ENCODE measurements at regions of chr6 and their contacts with region 1.

Region 1: GRCh38 chr6:111210194-111210728 is 123.0 kb downstream of the SLC16A10 start:
- DNase-seq: peak in 1 of 2 donors; percentile 76
- ATAC-seq: peak in 2 of 3 donors; percentile 74 to 81
- H3K4me3 ChIP-seq: no peak overlapping the region
- H3K4me3 Mint-ChIP-seq: no peak overlapping the region
- H3K27ac ChIP-seq: no peak overlapping the region
- H3K27ac Mint-ChIP-seq: no peak overlapping the region
- H3K4me1 ChIP-seq: no peaks in the 10 kb centered on the region
- H3K4me1 Mint-ChIP-seq: no peaks in the 10 kb centered on the region
- H3K27me3 ChIP-seq: no peaks in the 10 kb centered on the region
- H3K27me3 Mint-ChIP-seq: peaks cover 0 to 5% of the 10 kb centered on the region in 2 donors
- CTCF ChIP-seq: peak; percentile 62

Region 2: GRCh38 chr6:110528101-110528929 is 681.9 kb before region 1 on chr6:
- intact Hi-C with region 1: loop called (anchors 1 kb)
- DNase-seq: peak in 1 of 2 donors; percentile 81
- ATAC-seq: peak; percentile 64 to 76 (median 64)
- H3K4me3 ChIP-seq: no peak overlapping the region
- H3K4me3 Mint-ChIP-seq: no peak overlapping the region
- H3K27ac ChIP-seq: no peak overlapping the region
- H3K27ac Mint-ChIP-seq: no peak overlapping the region
- H3K4me1 ChIP-seq: no peaks in the 10 kb centered on the region
- H3K4me1 Mint-ChIP-seq: no peaks in the 10 kb centered on the region
- H3K27me3 ChIP-seq: no peaks in the 10 kb centered on the region
- H3K27me3 Mint-ChIP-seq: peaks cover 7 to 8% of the 10 kb centered on the region in 2 donors
- CTCF ChIP-seq: peak; percentile 81

Region 3: GRCh38 chr6:111011360-111012142 is 198.7 kb before region 1 on chr6:
- intact Hi-C with region 1: loop called (anchors 2 kb)
- DNase-seq: peak in 1 of 2 donors; percentile 66
- ATAC-seq: peak in 2 of 3 donors; percentile 66 to 68
- H3K4me3 ChIP-seq: no peak overlapping the region
- H3K4me3 Mint-ChIP-seq: no peak overlapping the region
- H3K27ac ChIP-seq: no peak overlapping the region
- H3K27ac Mint-ChIP-seq: no peak overlapping the region
- H3K4me1 ChIP-seq: no peaks in the 10 kb centered on the region
- H3K4me1 Mint-ChIP-seq: peaks cover 0 to 6% of the 10 kb centered on the region in 2 donors
- H3K27me3 ChIP-seq: no peaks in the 10 kb centered on the region
- H3K27me3 Mint-ChIP-seq: no peaks in the 10 kb centered on the region
- CTCF ChIP-seq: peak; percentile 66

Region 4: DNA sequence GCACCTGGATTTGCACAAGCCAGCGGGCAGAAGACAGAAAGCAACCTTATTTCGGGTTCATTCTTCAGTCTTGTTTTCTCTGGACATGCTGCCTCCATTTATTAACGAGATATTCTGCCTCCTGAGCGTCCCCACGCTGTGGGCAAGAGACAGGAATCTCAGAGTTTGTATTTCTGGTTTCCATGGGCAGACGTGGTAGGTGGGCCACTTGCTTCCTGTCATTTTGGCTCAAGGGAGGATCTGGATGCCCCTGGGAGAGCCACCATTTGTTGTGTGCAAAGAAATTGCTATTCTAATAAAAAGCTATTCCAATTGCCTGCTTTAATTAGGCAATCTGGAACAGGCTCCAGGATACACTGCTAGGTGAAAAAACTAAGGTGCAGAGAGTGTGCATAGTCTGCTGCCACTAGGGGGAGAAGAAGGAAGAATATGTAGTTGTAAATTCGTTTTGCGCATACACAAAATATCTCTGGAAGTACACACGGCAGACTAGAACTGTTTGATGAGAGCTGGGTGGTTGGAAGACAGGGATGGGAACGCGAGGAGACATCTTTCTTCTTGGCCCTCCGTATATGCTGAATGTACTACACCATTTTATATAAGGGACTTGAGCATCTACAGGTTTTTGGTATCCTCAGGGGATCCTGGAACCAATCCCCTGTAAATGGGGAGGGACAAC is 153.0 kb before region 1 on chr6:
- intact Hi-C with region 1: loop called (anchors 1 kb)
- DNase-seq: peak in 1 of 2 donors; percentile 69
- ATAC-seq: peak in 2 of 3 donors; percentile 47 to 60
- H3K4me3 ChIP-seq: no peak overlapping the region
- H3K4me3 Mint-ChIP-seq: no peak overlapping the region
- H3K27ac ChIP-seq: no peak overlapping the region
- H3K27ac Mint-ChIP-seq: no peak overlapping the region
- H3K4me1 ChIP-seq: no peaks in the 10 kb centered on the region
- H3K4me1 Mint-ChIP-seq: no peaks in the 10 kb centered on the region
- H3K27me3 ChIP-seq: no peaks in the 10 kb centered on the region
- H3K27me3 Mint-ChIP-seq: peaks cover 4 to 10% of the 10 kb centered on the region in 2 donors
- CTCF ChIP-seq: peak; percentile 57

Region 5: DNA sequence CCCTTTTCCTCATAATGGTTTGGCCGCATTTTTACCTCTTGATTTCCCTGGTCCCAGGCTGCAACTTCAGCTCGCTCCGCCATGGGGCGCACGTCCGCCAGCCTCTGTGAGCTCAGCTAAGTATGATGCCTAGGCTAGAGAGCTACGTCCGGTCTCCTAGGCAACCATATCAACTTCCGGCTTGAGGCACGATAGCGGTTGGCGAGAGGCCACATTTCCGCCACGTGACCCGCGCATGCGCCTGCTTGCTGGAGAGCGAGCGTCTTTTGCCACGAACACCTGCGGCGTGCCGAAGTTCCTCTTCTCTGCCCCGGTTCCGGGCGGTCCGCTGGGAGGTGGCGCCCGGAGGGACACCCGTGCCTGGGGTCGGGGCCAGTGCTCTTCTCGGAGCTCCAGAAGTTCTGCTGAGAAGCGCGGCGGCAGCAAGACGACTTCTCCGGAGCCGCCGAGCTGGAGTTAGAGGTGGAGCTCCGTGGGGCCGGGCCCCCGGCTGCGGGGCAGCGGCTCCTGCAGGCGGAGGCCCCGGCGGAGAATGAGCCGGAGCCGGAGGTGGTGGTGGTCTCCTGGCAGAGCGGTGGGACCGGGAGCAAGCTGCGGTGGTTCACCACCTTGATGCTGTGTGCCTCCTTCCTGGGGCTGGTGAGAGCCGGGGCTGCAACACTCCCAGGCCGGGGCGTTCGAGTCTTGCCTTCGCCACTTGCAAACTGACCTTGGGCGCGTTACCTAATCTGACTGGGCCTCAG is 49.0 kb after region 1 on chr6:
- intact Hi-C with region 1: no loop called
- DNase-seq: peak; percentile 99 to 100
- ATAC-seq: peak; percentile 94 to 100 (median 97)
- H3K4me3 ChIP-seq: peak overlapping the region; percentile 70
- H3K4me3 Mint-ChIP-seq: peak overlapping the region; percentile 84
- H3K27ac ChIP-seq: peak overlapping the region; percentile 91
- H3K27ac Mint-ChIP-seq: peak overlapping the region; percentile 86 to 87
- H3K4me1 ChIP-seq: peaks cover 17% of the 10 kb centered on the region
- H3K4me1 Mint-ChIP-seq: peaks cover 9 to 20% of the 10 kb centered on the region in 2 donors
- H3K27me3 ChIP-seq: no peaks in the 10 kb centered on the region
- H3K27me3 Mint-ChIP-seq: peaks cover 4 to 8% of the 10 kb centered on the region in 2 donors
- CTCF ChIP-seq: peak; percentile 81

Region 6: DNA sequence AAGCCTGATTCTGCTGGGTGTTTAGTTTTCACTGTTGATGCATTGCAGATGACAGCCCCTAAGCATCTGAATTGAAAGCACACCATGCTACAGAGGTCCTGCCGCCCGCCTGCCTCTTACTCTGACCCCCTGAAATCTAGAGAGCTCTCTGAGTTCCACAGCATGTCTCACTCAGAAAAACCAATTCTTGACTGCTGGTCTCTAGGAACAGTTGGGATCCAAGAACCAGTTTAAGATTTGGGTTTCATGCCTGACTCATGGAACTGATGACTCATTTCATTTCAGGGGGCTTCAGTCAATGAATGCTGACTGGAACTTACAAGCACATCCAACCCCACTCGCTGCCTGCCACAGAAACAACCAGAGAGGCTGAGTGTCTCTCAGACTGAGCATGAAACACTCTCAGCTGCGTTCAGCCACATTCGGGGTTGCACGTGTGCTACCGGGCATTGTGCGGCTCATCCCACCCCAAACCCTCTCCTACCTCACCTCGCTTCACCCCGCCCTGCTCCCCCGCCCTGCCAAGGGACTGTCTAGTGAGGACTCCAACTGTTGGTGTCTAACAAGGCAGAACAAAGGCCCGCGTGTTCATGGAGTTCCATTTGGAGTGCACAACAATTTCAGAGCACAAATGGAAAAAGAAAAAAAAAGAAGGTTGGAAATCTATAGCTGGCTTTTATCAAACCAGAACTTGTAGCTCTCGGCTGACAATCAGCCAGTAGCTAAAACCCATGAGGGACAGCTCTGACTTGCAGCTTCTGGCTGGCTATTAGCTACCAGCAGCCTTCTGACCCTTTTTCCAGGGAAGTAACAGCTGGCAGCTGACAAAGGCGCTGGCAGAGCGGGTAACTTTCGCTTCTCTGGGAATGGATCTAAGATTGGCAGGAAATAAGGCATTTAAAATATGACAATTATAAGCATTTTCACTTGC is 415.5 kb after region 1 on chr6:
- intact Hi-C with region 1: no loop called
- DNase-seq: no peak
- ATAC-seq: no peak
- H3K4me3 ChIP-seq: no peak overlapping the region
- H3K4me3 Mint-ChIP-seq: no peak overlapping the region
- H3K27ac ChIP-seq: no peak overlapping the region
- H3K27ac Mint-ChIP-seq: no peak overlapping the region
- H3K4me1 ChIP-seq: no peaks in the 10 kb centered on the region
- H3K4me1 Mint-ChIP-seq: no peaks in the 10 kb centered on the region
- H3K27me3 ChIP-seq: no peaks in the 10 kb centered on the region
- H3K27me3 Mint-ChIP-seq: no peaks in the 10 kb centered on the region
- CTCF ChIP-seq: no peak

Measured in natural killer cell (primary cell).